ENCODE measurements at regions of chr10 and their contacts with region 1.

Region 1: DNA sequence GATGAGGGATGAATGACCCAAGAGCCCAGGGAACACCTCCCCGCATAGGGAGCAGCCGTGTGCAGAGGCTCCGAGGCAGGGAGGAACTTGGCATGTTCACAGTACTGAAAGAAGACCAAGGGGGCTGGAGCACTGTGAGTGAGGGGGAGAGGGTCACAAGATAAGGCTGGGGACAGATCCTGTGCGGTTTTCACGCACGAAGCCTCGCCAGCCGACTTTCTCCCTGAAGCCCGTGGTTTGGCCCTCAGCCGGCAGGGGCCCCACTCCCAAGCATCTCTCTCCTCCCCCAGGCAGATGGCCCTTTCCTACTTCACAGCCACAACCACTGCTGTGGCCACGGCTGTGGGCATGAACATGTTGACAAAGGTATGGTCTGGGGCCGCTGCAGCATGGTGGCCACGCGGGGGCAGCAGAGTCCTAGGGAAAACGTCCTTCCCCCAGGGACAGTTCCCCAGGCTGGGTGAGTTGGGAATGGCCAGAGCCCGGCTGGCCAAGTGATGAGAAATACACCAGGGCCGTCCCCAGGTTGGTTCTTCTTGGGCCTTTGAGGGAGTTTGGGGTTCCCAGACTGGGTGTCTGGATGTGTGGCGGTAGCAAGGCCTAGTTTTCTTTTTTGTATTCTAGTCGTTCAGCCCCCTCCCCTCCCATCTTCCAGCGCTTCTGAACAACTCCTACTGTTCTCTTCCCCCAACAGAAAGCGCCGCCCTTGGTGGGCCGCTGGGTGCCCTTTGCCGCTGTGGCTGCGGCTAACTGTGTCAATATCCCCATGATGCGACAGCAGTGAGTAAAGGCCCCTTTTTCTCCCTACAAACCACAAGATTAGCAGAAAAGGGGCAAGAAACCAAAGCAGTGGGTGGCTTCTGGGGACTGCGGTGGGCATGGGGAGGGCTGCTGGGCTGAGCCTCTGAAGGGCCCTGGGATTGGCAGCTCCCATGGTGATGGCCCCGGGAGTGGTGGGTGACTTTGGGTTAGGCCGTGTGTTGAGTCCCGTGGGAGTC is 14.4 kb upstream of the WBP1L start:
- DNase-seq: peak; percentile 81 to 88 (median 88)
- ATAC-seq: peak; percentile 97
- H3K4me3 ChIP-seq: no peak overlapping the region
- H3K4me1 ChIP-seq: no peaks in the 10 kb centered on the region
- CTCF ChIP-seq: peak; percentile 79

Region 2: DNA sequence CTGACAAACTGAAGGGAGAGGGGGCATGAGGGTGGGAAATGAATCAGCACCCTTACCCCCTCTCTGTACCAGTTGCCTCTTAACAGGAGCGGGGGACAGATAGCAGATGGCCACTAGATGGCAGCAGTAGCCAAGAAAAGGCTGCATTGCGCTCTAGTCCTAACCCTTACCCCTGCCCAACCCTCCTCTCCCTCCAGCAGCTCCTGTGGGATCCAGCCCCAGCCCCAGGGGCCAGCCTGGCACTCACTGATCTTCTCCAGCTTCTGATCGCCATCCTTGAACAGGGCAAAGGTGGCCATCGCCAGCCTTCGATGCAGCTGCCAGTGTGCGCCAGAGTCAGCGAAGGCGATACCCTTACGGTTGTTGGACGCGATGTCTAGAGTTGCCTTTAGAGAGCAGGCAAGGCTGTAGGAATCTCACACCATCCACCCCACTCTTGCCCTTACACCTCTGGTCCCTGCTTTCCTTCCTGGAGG is 105.7 kb after region 1 on chr10:
- intact Hi-C with region 1: loop called in 1 of 2 experiments (anchors 10 kb)
- DNase-seq: peak; percentile 50 to 87 (median 77)
- ATAC-seq: peak; percentile 90
- H3K4me3 ChIP-seq: no peak overlapping the region
- H3K4me1 ChIP-seq: no peaks in the 10 kb centered on the region
- CTCF ChIP-seq: peak; percentile 64